ENCODE measurements at regions of chr2 and their contacts with region 1.

Region 1: DNA sequence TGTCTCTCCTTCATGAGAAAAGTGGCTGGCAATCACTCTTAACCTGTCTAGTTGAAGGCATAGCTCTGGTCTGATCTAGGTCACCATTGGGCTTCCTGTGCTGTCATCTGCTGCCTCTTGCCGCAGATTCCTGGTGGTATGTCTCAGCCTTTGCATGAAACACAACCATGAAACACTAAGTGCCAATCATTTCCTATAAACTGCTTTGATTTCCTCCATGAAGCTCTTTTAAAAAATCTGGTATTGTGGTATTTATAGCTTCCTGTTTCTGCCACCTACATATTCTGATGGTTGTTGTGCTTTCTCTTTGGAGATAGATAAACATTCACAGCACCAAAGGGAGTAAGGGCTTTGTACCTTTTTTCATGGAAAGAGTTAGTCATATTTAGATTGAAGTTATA is 120.0 kb upstream of the EPC2 start:
- DNase-seq: no peak
- H3K4me3 ChIP-seq: no peak overlapping the region
- H3K27me3 ChIP-seq: no peaks in the 10 kb centered on the region
- CTCF ChIP-seq: no peak

Region 2: GRCh38 chr2:148493822-148494563 is 30.5 kb before region 1 on chr2:
- CTCF ChIA-PET with region 1: no interaction called
- POLR2A ChIA-PET with region 1: interaction called, 11 read pairs
- DNase-seq: no peak
- H3K4me3 ChIP-seq: no peak overlapping the region
- H3K27me3 ChIP-seq: no peaks in the 10 kb centered on the region
- CTCF ChIP-seq: no peak